Left colon (tissue), 2 donors: ENCODE measurements at regions of chr2 and their contacts with region 1.

Region 1: DNA sequence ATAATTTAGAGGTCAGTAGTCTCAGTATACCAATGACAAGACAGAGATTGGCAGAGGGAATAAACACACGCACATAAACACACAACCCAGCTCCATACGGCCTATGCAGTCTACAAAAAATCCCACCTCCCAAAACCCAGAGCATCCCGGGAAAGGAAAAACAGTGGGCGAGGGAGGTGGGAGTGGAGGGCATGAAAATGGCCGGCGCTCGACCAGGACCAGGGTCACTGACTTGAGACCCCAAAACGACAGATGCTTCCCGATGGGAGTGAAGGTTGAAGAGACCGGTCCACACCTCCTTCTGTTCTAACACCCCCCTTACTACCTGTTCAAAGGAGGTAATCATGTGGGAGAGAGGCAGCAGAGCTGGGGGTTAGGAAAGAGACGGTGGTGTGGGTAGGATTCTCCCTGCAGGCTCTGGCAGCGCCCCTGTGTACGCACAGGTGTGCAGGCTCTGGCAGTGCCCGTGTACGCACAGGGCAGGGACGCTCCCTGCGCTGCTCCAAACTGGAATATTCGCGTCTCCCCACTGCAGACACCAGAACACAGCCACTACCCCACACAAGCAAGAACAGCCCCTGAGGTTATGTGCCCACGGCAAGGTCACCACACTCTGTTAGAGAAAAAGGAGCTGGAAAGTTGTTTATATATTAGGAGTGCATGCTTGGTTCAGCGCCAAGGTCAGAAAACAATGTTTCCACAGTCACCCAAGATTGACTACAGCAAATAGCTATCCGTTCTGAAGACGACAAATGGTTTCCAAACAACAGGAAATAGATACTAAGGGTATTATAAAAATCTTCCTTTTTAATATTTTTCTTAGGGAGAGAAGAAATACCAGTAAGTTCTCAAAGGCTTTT is 67.9 kb downstream of the EIPR1 start:
- DNase-seq: no peak
- ATAC-seq: no peak

Region 2: DNA sequence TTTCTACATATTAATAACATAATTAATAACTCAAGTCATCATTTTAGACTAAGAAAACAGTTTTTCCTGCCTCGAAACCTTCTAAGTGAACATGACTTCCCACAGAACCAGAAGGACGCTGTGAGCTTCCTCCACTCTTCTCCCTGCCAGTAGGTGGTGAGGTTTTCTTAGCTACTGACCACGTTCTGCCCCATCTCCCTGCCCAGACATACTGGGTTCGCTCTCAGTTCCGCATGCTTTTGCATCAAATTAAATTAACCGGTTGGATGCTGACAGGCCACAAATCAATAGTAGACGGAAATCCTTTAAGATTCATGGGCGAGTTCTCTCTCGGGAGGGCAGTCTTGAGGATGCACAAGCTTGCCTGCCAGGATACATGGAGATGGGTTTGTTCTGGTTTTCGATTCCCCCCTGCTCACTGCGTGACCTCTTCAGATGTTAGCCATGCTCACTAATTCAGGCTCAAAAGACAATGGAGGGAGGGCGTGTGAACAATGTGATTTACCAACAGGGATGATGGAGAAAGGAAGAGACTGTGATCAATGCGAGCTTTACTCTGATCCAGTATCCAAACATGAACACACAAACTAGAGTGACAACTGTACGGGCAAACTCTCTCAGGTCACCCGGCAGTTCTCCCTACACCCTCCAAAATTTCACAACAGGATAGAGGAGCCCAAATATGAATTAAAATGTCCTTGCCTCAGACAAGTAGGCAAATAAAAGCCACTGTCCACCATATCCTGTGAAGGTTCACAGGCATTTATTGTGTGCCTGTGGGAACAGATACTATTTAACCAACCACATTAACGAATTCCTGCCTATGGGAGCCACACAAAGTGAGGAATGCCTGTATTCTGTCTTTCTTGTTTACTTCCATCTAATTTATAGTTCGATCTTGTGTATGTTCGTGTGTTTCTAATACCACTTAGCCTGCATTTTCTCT is 307.8 kb before region 1 on chr2:
- intact Hi-C with region 1: loop called in 1 of 2 experiments (anchors 5 kb)
- DNase-seq: no peak
- ATAC-seq: peak; percentile 72

Region 3: DNA sequence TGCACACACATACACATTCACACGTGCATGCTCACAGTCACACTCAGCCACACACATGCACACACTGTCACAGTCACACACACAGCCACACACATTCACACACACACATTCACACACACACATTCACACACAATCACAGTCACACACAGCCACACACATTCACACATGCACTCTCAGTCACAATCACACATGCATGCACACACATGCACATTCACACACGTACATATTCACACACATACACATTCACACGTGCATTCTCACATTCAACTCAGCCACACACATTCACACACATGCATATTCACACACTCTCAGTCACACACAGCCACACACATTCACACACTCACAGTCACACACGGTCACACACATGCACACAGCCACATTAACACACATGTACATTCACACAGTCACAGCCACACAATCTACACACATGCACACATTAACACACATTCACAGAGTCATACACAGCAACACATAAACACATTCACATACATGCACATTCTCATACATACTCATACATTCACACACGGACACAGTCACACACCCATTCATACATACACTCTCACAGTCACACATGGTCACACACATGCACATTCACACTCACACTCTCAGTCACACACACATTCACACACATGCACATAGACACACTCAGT is 171.9 kb before region 1 on chr2:
- intact Hi-C with region 1: no loop called
- DNase-seq: no peak
- ATAC-seq: no peak

Region 4: DNA sequence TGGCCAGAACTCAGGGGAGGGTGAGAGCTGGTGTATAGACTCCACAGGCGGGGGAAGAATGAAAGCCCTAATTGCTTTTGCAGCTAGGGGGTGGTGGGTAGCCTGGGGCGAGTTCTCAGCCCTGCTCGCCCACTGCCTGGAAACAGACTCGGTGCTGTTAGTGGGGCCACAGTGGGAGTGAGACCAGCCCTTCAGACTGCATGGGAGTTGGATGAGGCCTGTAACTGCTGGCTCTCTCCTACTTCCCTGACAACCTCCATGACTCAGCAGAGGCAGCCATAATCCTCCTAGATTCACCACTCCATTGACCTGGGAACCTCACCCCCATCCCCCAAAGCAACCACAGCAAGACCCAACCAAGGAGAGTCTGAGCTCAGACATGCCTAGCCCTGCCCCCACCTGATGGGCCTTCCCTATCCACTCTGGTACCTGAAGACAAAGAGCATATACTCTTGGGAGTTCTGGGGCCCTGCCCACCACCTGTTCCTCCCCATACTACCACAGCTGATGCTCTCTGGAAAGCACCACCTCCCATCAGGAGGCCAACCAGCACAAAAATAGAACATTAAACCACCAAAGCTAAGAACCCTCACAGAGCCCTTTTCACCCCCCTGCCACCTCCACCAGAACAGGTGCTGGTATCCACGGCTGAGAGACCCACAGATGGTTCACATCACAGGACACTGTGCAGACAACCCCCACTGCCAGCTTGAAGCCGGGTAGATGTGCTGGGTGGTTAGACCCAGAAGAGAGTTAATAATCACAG is 158.4 kb before region 1 on chr2:
- intact Hi-C with region 1: no loop called
- DNase-seq: no peak
- ATAC-seq: no peak